ENCODE measurements at regions of chr4 and their contacts with region 1.

Region 1: DNA sequence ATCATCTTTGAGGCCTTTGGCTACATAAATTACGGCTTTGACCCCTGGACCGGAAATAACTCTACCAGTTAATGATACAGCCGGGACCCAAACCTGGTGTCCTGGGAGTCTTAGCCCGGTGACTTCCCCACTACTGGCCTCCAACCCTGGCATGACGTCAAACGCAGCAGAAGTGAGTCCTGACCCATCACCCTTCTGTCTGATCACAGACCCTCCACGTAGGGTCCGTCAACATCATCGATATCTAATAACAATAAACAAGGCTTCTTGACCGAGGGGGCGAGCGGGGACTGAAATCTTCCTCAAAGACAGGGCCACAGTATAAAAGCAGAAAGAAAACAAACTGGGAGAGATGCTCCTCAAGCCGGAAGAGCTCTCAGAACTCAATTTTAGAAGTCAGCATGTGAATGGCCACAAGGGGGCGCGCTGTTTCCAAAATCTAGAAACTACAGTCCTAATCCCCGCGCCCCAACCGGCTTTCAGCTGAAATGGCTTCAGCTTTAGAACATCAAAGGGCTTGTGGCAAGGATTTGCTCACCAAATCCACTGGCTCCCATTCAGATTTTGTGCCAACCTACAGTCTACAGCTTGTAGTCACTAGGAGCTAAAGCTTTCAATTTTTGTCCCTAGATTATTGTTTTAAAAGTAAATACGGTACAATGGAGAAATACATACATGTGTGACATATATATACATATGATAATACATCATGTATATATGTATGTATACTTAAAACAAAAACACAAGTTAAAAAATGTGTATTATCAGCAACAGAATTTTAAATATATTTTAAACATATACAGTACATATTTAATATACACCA is 46.4 kb upstream of the ENPP6 start:
- DNase-seq: peak; percentile 98
- ATAC-seq: peak; percentile 57
- H3K4me3 Mint-ChIP-seq: peak overlapping the region; percentile 2
- H3K27ac Mint-ChIP-seq: peak overlapping the region; percentile 41
- H3K4me1 Mint-ChIP-seq: peaks cover 47% of the 10 kb centered on the region
- H3K27me3 Mint-ChIP-seq: no peaks in the 10 kb centered on the region

Region 2: DNA sequence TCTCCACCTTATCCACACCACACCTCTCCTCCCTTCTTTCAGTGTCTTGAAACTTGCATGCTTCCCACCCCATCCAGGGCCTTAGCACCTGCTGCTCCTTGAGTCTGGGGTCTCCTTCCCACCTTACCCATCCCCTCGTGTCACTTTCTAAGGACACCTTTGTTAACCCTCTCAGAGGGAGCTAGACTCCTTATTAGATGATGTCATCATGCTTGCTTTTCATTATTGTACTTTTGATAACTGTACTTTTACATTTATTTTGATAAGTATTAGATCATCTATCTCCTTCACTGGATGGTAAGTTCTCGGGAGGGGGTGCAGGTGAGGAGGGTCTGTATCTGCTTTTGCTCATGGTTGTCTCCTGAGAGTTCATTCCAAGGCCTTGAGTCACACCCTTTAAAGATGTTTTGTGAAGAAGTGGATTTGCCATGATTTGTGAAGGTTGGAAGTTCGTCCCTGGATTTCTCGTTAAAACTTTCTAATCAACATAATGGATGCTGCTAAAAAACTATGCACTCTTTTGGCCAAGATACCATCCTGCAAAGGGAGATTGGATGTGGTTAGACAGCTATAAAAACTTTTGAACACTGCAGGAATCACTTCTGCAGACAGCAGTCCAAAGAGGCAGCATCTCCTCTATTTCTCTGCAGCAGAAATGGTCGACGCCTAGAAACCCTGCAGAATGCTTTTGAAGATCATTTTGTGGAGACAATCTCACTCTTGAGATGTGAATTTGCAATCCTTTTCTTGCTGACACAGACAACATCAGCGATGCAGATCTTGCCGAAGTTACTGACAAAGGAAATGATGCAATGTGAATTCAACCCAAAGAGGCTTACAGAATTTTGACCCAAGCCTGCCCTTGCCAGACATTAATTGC is 116.0 kb before region 1 on chr4:
- CTCF ChIA-PET with region 1: no interaction called
- POLR2A ChIA-PET with region 1: no interaction called
- intact Hi-C with region 1: no loop called
- DNase-seq: no peak
- ATAC-seq: peak; percentile 26
- H3K4me3 Mint-ChIP-seq: no peak overlapping the region
- H3K27ac Mint-ChIP-seq: no peak overlapping the region
- H3K4me1 Mint-ChIP-seq: peaks cover 7% of the 10 kb centered on the region
- H3K27me3 Mint-ChIP-seq: peaks cover 8% of the 10 kb centered on the region

Region 3: GRCh38 chr4:184282251-184282713 is 18.2 kb after region 1 on chr4:
- CTCF ChIA-PET with region 1: interaction called, 39 read pairs
- POLR2A ChIA-PET with region 1: interaction called, 15 read pairs
- intact Hi-C with region 1: loop called (anchors 1 kb)
- DNase-seq: peak; percentile 82
- ATAC-seq: peak; percentile 74
- H3K4me3 Mint-ChIP-seq: peak overlapping the region; percentile 56
- H3K27ac Mint-ChIP-seq: peak overlapping the region; percentile 93
- H3K4me1 Mint-ChIP-seq: peaks cover 65% of the 10 kb centered on the region
- H3K27me3 Mint-ChIP-seq: peaks cover 4% of the 10 kb centered on the region

Region 4: GRCh38 chr4:184318852-184319251 is 54.7 kb after region 1 on chr4:
- CTCF ChIA-PET with region 1: interaction called, 3 read pairs
- POLR2A ChIA-PET with region 1: no interaction called
- intact Hi-C with region 1: loop called (anchors 1 kb)
- DNase-seq: no peak
- ATAC-seq: peak; percentile 8
- H3K4me3 Mint-ChIP-seq: no peak overlapping the region
- H3K27ac Mint-ChIP-seq: peak overlapping the region; percentile 59
- H3K4me1 Mint-ChIP-seq: peaks cover 35% of the 10 kb centered on the region
- H3K27me3 Mint-ChIP-seq: peaks cover 3% of the 10 kb centered on the region

Region 5: DNA sequence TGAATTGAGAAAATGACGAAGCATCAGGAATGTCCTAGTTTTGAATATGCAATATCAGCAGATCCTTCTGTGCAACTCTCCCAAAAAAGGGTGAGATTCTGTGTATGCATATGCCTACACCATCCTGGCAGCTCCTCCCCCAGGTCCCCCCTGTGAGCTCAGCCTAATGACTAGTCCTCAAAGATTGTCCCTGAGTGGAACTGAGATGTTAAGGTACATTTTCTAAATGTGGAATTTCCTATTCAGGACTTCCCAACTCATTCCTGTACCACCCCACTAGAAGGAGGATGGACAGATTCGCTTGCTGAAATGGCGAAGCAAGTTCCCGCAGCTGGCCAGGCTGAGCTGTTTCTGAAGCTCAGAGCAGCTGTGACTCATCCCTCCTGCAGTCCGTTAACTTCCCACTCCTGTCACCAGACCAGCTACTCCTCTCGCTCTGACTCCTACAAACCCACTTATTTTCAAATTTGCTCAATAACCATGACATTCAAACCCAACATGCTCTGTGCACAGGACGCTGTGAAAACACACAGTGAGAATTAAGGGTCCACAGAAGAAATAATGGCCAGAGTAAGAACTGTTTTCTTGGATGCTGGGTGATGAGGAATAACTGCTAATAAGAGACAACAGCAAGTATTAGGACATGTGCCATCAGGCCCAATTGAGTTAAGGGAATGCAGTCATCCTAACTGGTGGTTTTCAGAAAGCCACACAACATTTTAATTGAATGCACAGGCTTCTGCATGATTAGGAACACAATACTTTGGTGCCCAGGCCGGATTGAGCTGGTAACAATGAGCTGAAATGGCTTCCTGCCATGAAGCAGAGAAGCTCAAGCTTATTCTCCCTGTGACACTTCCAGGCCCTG is 250.2 kb after region 1 on chr4:
- CTCF ChIA-PET with region 1: interaction called, 23 read pairs
- POLR2A ChIA-PET with region 1: interaction called, 6 read pairs
- intact Hi-C with region 1: loop called in 1 of 2 experiments (anchors 1 kb)
- DNase-seq: peak; percentile 89
- ATAC-seq: peak; percentile 91
- H3K4me3 Mint-ChIP-seq: peak overlapping the region; percentile 51
- H3K27ac Mint-ChIP-seq: peak overlapping the region; percentile 90
- H3K4me1 Mint-ChIP-seq: peaks cover 43% of the 10 kb centered on the region
- H3K27me3 Mint-ChIP-seq: peaks cover 1% of the 10 kb centered on the region

Region 6: DNA sequence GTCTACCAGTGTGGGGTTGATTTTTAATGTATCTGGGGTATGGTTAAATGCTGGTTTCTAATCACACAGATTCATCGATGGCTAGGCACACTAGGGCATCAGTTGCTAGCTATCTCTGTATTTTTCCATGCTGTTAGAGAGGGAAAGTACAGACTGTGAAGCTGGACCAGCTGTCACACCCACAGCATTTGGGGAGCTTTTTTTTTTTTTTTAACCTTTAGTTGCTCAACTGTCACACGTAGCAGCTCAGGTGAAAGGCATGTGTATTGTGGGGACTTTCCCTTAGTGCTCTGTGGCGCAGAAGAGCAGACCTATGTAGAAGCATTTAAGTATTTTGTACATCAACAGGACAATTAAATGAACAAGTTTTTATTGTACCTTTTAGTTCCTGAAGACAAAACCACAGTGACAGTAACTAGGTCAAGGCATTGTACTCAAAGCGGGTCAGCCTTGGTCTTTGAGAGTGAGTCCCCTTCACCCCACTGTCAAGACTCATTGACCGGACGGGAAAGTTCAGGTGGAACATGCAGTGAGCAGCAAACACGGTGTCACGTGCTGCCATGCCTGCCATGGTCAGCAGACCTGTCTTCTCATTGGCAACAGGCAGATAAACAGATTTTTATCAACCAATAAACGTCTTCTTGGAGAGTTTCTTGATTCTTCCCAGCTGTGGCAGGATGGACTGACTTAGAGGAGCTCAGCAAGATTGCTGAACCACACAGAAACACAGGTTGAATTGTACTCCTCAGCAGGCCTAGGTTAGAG is 319.8 kb after region 1 on chr4:
- CTCF ChIA-PET with region 1: interaction called, 4 read pairs
- POLR2A ChIA-PET with region 1: no interaction called
- intact Hi-C with region 1: loop called (anchors 2 to 5 kb)
- DNase-seq: peak; percentile 61
- ATAC-seq: peak; percentile 88
- H3K4me3 Mint-ChIP-seq: no peak overlapping the region
- H3K27ac Mint-ChIP-seq: peak overlapping the region; percentile 77
- H3K4me1 Mint-ChIP-seq: peaks cover 25% of the 10 kb centered on the region
- H3K27me3 Mint-ChIP-seq: no peaks in the 10 kb centered on the region

Region 7: DNA sequence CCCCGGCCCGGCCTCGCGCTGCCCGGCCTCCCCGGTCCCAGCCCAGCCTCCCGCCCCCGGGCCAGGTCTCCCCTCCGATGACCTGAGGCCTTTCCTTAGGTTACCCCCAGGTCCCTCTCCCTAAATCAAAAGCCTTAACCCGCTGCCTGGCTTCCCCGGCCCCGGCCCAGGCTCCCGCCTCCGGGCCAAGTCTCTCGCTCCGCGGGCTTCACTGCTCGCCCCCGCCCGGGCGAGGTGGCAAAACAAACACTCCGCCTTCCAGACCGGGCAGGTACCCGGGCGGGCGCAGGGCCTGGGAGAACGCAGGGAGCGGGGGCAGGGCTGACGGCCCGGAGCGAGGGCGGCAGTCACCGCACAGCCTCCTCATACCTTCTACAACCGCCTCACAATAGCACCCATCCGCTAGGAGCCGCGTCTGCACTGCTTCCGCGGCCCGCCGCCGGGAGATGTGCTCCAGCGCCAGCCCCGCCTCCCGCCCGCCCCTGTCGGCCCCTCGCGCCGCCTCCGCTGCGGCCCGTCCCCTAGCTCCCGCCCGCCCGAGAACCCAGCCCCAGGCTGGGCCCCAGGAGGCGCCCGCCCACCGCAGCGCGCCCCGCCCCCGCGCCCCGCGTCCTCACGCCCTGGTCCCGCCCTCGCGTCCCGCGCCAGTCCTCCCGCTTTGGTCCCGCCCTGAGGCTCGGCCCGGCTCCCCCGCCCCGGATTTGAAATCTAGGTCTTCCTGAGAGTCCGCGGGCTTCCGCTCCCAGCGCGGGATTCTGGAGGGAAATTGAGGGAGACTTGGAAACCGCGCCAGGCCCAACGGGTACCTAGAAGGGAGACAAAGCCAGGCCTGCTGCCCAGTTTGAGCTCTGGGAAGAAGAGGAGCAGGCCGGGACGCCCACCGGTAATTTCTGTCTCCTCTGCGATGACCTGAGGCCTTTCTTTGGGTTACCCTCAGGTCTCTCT is 385.2 kb after region 1 on chr4 and contains the starts of genes CASP3 and PRIMPOL:
- CTCF ChIA-PET with region 1: interaction called, 11 read pairs
- POLR2A ChIA-PET with region 1: interaction called, 6 read pairs
- intact Hi-C with region 1: loop called (anchors 1 to 2 kb)
- DNase-seq: peak; percentile 98
- ATAC-seq: peak; percentile 88
- H3K4me3 Mint-ChIP-seq: peak within 1 kb of the TSS; percentile 94
- H3K27ac Mint-ChIP-seq: peak within 1 kb of the TSS; percentile 95
- H3K4me1 Mint-ChIP-seq: peaks cover 51% of the 10 kb centered on the region
- H3K27me3 Mint-ChIP-seq: no peaks in the 10 kb centered on the region
- total RNA-seq, gene CASP3: 44.3 to 65.7 TPM
- total RNA-seq, gene PRIMPOL: 20.4 to 24.3 TPM